ENCODE measurements at regions of chr2 and their contacts with region 1.

Region 1: DNA sequence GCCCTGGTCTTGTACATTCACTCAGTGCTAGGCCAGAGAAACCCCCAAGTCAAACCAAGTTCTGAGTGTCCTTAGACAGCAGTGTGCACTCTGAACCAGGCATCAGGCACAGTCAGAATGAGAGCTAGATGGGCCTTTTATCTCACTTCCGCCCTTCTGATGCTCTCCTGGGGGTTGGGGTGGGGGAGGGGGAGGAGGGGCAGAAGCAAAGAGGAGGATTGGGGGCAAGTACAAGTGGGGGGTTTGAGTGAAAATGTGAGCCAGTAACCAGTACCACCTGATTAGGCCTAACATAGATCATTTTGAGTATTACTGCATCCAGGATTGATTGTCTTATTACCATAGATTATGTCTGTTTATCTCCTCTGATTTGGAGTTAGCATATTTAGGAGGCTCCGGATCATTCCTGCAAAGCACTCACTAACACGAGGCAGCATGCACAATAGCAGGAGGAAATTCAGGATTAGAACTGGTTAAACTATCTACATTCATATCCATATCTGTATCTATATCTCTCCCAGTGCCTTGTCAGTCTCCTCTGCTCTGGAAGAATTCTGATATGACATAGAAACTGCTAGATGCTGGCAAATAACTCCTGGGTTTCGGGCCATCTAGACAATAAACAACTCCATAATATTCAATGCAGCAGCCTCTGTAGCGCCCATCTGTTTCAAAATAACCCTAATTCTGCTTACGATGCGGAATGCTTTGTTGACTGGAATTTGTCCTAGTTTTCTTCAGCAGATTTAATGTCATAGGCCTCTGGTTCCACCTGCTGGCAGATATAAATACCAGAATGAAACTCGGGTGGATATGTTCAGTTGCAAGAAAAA is 149.1 kb downstream of the RHBDD1 start:
- DNase-seq: peak; percentile 56
- H3K4me3 ChIP-seq: no peak overlapping the region
- CTCF ChIP-seq: peak; percentile 45

Region 2: DNA sequence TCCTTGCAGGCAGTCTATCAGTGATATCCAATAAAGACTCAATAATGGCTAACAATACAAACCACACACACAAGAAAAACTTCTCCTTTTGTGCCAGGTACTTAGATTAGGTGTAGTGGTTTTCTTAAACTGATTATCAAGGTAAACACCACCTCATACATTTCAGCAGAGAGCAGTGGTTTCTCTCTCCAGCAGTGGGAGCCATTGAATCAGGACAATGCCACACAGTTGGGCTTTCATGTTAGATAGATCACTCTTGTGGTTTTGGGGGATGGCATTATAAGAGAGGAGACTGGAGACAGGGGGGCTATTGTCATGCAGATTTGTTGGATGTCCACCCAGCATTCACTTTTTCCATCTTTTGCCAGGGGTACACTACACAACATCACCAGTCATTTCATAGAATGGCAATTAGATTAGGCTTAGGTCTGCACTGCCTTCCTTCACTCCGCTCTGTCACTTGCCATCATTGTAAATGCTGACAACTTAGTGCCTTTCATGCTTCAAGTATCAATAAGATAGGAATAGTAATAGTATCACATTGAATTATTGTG is 171.7 kb before region 1 on chr2:
- CTCF ChIA-PET with region 1: interaction called, 16 read pairs
- POLR2A ChIA-PET with region 1: no interaction called
- DNase-seq: no peak
- H3K4me3 ChIP-seq: no peak overlapping the region
- CTCF ChIP-seq: peak; percentile 56